ENCODE measurements at regions of chr6 and their contacts with region 1.

Region 1: GRCh38 chr6:431986-432385 is 40.4 kb downstream of the IRF4 start:
- DNase-seq: no peak
- ATAC-seq: no peak
- H3K4me3 ChIP-seq: no peak overlapping the region
- H3K27ac ChIP-seq: no peak overlapping the region
- H3K4me1 ChIP-seq: peaks cover 35% of the 10 kb centered on the region
- H3K27me3 ChIP-seq: no peaks in the 10 kb centered on the region
- CTCF ChIP-seq: no peak
- EP300 ChIP-seq: no peak
- POLR2A ChIP-seq: no peak
- RAD21 ChIP-seq: no peak

Region 2: DNA sequence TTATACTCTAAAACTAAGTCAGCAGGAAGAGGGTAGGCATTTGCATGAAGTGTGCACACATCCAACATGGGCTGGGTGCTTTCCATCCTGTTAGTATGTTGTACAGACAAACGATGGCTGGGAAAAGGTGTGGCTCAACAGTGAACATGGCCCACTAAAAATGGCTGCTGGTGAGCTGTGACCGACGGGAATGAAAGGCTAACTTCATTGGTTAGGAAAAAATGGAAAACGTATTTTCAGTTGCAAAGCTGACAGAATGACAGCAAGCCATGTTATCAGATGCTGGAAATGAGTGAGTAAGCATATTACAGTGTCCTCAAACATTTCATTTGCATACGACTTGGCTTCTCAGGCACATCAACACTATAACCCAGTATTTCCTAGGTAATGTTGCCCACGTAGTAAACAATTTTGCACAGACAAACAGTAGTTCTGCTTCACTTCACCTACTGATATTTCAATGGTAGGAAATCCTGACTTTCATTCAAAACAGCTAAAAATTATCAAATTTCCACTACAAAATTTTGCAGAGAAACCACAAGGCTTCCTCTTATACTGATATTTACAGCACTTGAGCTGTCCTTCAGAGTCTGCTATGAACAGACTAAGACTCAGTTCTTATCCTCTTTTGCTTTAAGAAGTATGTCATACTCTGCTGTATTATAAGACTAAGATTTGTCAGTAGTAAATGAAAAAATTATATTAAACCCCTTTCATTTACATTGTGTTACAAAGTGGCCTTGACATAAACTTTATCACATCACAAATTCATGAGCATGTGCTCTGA is 58.5 kb after region 1 on chr6:
- CTCF ChIA-PET with region 1: interaction called, 6 read pairs
- POLR2A ChIA-PET with region 1: interaction called, 4 read pairs
- RAD21 ChIA-PET with region 1: interaction called, 11 read pairs
- SMC1A ChIA-PET with region 1: interaction called, 7 read pairs
- in situ Hi-C with region 1: no loop called
- intact Hi-C with region 1: no loop called
- DNase-seq: peak; percentile 39
- ATAC-seq: peak; percentile 82
- H3K4me3 ChIP-seq: no peak overlapping the region
- H3K27ac ChIP-seq: peak overlapping the region; percentile 22; the same call in 1 of the 2 replicates
- H3K4me1 ChIP-seq: peaks cover 33% of the 10 kb centered on the region
- H3K27me3 ChIP-seq: no peaks in the 10 kb centered on the region
- CTCF ChIP-seq: no peak
- EP300 ChIP-seq: no peak
- POLR2A ChIP-seq: no peak
- RAD21 ChIP-seq: no peak

Region 3: GRCh38 chr6:733431-734219 is 301.6 kb after region 1 on chr6:
- CTCF ChIA-PET with region 1: no interaction called
- POLR2A ChIA-PET with region 1: no interaction called
- RAD21 ChIA-PET with region 1: no interaction called
- SMC1A ChIA-PET with region 1: no interaction called
- in situ Hi-C with region 1: no loop called
- intact Hi-C with region 1: no loop called
- DNase-seq: no peak
- ATAC-seq: no peak
- H3K4me3 ChIP-seq: no peak overlapping the region
- H3K27ac ChIP-seq: no peak overlapping the region
- H3K4me1 ChIP-seq: no peaks in the 10 kb centered on the region
- H3K27me3 ChIP-seq: peaks cover 2 to 6% of the 10 kb centered on the region in 2 experiments; a peak in 2 of 4 replicates
- CTCF ChIP-seq: no peak
- EP300 ChIP-seq: no peak
- POLR2A ChIP-seq: no peak
- RAD21 ChIP-seq: no peak

Region 4: GRCh38 chr6:797479-798077 is 365.6 kb after region 1 on chr6:
- CTCF ChIA-PET with region 1: no interaction called
- POLR2A ChIA-PET with region 1: no interaction called
- RAD21 ChIA-PET with region 1: no interaction called
- SMC1A ChIA-PET with region 1: no interaction called
- in situ Hi-C with region 1: no loop called
- intact Hi-C with region 1: no loop called
- DNase-seq: no peak
- ATAC-seq: peak; percentile 64
- H3K4me3 ChIP-seq: no peak overlapping the region
- H3K27ac ChIP-seq: no peak overlapping the region
- H3K4me1 ChIP-seq: no peaks in the 10 kb centered on the region
- H3K27me3 ChIP-seq: peaks cover 3 to 9% of the 10 kb centered on the region in 2 experiments
- CTCF ChIP-seq: peak; percentile 58 to 62 (median 59)
- EP300 ChIP-seq: no peak
- POLR2A ChIP-seq: no peak
- RAD21 ChIP-seq: peak; percentile 89